Natural killer cell (primary cell): ENCODE measurements at regions of chr6 and their contacts with region 1.

Region 1: DNA sequence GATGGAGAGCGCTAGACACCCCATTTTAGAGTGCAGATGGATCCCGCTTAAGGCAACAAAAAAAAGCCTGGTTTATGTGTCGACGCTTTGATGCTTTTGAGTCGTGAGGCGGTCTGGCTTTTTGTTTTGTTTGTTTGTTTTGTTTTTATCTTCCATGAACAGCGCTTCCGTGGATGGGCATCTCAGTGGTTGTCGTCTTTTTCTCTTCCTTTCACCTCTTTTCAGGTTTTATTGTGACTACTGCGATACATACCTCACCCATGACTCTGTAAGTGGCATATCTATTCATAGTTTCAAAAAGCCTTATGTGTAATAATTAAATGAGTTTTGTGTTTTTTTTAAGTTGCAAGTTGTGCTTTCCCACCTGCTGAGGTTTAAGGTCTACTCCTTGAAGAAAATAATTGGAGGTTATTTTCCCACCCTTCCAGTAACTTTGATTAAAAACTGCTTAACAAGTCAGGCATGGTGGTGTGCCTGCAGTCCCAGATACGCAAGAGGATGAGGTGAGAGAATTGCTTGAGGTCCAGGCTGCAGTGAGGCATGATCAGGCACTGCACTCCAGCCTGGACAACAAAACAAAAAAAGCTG is 476 bp downstream of the SNRPC start:
- DNase-seq: no peak
- ATAC-seq: no peak
- H3K4me3 ChIP-seq: peak overlapping the region; percentile 85
- H3K4me3 Mint-ChIP-seq: no peak overlapping the region
- H3K27ac ChIP-seq: peak overlapping the region; percentile 84
- H3K27ac Mint-ChIP-seq: no peak overlapping the region
- H3K4me1 ChIP-seq: peaks cover 15% of the 10 kb centered on the region
- H3K4me1 Mint-ChIP-seq: peaks cover 0 to 4% of the 10 kb centered on the region in 2 donors
- H3K27me3 ChIP-seq: no peaks in the 10 kb centered on the region
- H3K27me3 Mint-ChIP-seq: no peaks in the 10 kb centered on the region
- CTCF ChIP-seq: no peak

Region 2: DNA sequence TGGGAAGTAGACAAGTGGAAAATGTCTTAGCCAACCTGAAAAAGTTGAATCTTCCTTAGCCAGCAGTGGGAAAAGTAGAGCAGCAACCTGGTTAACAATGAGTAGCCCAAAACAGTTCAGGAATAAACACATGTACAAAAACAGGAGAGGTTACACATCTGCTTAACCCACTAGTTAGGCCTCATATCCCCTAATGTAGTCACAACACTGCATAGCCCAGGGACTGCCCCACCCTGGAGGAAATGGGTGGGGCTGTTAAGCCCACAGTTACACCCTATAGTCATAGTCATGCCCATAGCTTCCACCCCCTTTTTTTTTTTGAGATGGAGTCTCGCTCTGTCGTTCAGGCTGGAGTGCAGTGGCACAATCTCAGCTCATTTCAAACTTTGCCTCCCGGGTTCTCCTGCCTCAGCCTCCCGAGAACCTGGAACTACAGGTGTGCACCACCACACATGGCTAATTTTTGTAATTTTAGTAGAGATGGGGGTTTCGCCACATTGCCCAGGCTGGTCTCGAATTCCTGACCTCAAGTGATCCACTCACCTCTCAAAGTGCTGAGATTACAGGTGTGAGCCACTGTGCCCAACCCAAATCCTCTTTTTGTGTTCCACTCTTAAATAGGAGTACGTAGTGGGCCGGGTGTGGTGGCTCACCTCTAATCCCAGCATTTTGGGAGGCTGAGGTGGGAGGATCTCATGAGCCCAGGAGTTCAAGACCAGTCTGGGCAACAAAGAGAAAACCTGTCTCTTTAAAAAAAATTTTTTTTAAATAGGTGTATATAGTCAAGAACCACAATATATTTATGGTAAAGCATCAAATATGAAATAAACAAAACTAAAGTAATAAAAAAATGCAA is 85.8 kb before region 1 on chr6:
- intact Hi-C with region 1: loop called (anchors 5 kb)
- DNase-seq: peak; percentile 70 to 91
- ATAC-seq: peak; percentile 91 to 99 (median 98)
- H3K4me3 ChIP-seq: peak overlapping the region; percentile 6
- H3K4me3 Mint-ChIP-seq: peak overlapping the region; percentile 88
- H3K27ac ChIP-seq: peak overlapping the region; percentile 92
- H3K27ac Mint-ChIP-seq: peak overlapping the region; percentile 88 to 97
- H3K4me1 ChIP-seq: peaks cover 49% of the 10 kb centered on the region
- H3K4me1 Mint-ChIP-seq: peaks cover 48 to 57% of the 10 kb centered on the region in 2 donors
- H3K27me3 ChIP-seq: no peaks in the 10 kb centered on the region
- H3K27me3 Mint-ChIP-seq: no peaks in the 10 kb centered on the region
- CTCF ChIP-seq: no peak

Region 3: GRCh38 chr6:34791701-34792235 is 34.0 kb after region 1 on chr6 and contains the start of gene BLTP3A:
- intact Hi-C with region 1: loop called (anchors 1 kb)
- DNase-seq: peak; percentile 80 to 90
- ATAC-seq: peak; percentile 90 to 96 (median 92)
- H3K4me3 ChIP-seq: peak within 1 kb of the TSS; percentile 93
- H3K4me3 Mint-ChIP-seq: peak within 1 kb of the TSS; percentile 93
- H3K27ac ChIP-seq: peak within 1 kb of the TSS; percentile 88
- H3K27ac Mint-ChIP-seq: peak within 1 kb of the TSS; percentile 89 to 97
- H3K4me1 ChIP-seq: peaks cover 18% of the 10 kb centered on the region
- H3K4me1 Mint-ChIP-seq: peaks cover 30 to 35% of the 10 kb centered on the region in 2 donors
- H3K27me3 ChIP-seq: no peaks in the 10 kb centered on the region
- H3K27me3 Mint-ChIP-seq: no peaks in the 10 kb centered on the region
- CTCF ChIP-seq: no peak
- total RNA-seq, gene BLTP3A: 16.6 to 17.5 (median 17.1) TPM

Region 4: GRCh38 chr6:34887753-34888513 is 130.2 kb after region 1 on chr6 and contains the start of gene TAF11:
- intact Hi-C with region 1: loop called (anchors 1 kb)
- DNase-seq: peak; percentile 89 to 97
- ATAC-seq: peak; percentile 76 to 88 (median 77)
- H3K4me3 ChIP-seq: peak within 1 kb of the TSS; percentile 63
- H3K4me3 Mint-ChIP-seq: peak within 1 kb of the TSS; percentile 100
- H3K27ac ChIP-seq: peak within 1 kb of the TSS; percentile 89
- H3K27ac Mint-ChIP-seq: peak within 1 kb of the TSS; percentile 100
- H3K4me1 ChIP-seq: peaks cover 26% of the 10 kb centered on the region
- H3K4me1 Mint-ChIP-seq: peaks cover 50 to 67% of the 10 kb centered on the region in 2 donors
- H3K27me3 ChIP-seq: no peaks in the 10 kb centered on the region
- H3K27me3 Mint-ChIP-seq: no peaks in the 10 kb centered on the region
- CTCF ChIP-seq: no peak
- total RNA-seq, gene TAF11: 34.4 to 41.3 (median 36.2) TPM